ENCODE measurements at regions of chr16 and their contacts with region 1.

Region 1: DNA sequence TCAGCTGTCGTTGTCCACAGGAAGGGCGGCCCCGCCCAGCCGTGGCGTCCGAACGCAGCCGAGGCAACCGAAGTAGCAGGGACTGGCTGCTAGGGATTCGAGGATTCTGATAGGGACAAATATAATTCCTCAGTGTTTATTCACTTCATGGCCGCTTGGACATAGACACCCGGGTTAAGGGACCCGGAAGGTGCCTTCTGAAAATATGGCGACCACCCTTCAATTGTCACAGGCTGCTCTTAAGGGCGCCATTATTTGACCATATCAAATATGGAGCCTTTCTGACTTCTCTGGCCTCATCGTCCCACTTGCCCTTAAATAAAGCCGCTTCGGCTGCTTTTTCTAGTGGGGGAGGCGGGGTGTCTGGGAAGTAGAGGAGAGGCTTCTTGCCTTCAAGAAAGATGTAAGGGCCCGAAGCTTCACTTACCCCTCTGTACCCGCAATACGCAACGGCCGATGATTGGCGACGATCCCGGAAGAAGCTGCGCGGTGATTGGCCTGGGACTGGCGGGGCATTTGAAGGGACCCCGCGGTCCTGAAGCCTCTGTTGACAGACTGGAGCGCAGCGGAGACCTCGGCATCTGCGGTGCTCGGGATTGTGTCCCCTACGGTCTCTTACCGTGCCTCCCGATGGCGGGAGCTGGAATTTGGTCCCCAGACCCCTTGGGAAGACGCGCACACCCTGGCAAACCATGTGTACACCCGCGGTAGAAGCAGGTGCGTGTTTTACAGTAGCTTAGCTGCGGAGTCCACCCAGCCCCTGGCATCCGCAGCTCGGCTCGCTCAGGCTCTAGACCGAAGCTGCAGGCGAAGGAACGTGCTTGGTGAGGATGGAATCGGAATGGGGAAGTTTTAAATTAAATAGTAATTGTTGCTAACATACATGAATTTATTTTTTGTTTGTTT is at the start of gene ZNF688:
- DNase-seq: peak; percentile 90
- ATAC-seq: peak; percentile 86
- H3K4me3 Mint-ChIP-seq: peak within 1 kb of the TSS; percentile 97
- H3K27ac Mint-ChIP-seq: peak within 1 kb of the TSS; percentile 90
- H3K4me1 Mint-ChIP-seq: peaks cover 36% of the 10 kb centered on the region
- H3K27me3 Mint-ChIP-seq: no peaks in the 10 kb centered on the region
- total RNA-seq, gene ZNF688: 17.8 to 18.3 TPM

Region 2: DNA sequence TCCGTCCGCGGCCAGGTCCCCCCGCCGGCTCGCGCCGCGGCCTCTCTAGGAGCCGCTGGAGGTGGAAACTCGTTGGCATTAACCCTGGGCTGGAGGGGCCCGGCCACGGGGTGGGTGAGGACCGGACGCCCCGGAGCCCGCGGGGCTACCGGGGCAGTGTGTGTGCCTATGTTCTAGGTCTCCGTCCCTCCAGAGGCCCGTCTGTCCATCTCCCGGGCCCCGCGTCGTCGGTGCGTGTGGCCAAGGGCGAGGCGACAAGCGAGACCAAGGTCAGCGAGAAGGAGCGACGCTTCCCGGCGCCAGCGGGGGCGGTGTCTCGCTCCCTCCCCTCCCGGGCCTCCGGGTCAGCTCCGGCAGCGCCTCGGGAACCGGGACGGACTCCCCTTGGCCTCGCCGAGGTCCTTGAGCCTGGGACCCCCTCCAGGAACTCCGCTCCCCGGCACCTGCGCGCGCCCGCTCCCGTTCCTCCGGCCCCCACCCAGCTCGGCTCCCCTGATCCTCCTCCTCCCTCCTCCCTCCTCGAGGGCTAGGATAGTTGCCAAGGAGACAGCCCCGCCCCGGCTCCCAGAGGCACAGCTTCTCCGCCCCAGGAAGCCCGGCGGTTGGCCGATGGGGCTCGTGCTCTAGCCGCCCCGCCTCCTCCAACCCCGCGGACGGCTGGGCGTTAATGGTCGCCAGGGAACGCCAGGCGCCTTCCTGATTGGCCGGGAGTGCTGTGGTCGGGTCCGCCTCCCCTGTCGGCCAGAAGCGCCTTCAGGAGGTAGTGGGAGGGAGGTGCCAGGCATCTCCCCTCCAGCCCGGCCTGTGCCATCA is 44.9 kb before region 1 on chr16:
- POLR2A ChIA-PET with region 1: interaction called, 10 read pairs
- DNase-seq: peak; percentile 95
- ATAC-seq: peak; percentile 88
- H3K4me3 Mint-ChIP-seq: peak overlapping the region; percentile 76
- H3K27ac Mint-ChIP-seq: peak overlapping the region; percentile 83
- H3K4me1 Mint-ChIP-seq: peaks cover 21% of the 10 kb centered on the region
- H3K27me3 Mint-ChIP-seq: no peaks in the 10 kb centered on the region

Region 3: GRCh38 chr16:30551781-30552180 is 20.2 kb before region 1 on chr16:
- POLR2A ChIA-PET with region 1: interaction called, 68 read pairs
- DNase-seq: peak; percentile 63
- ATAC-seq: peak; percentile 93
- H3K4me3 Mint-ChIP-seq: peak overlapping the region; percentile 73
- H3K27ac Mint-ChIP-seq: peak overlapping the region; percentile 93
- H3K4me1 Mint-ChIP-seq: peaks cover 45% of the 10 kb centered on the region
- H3K27me3 Mint-ChIP-seq: no peaks in the 10 kb centered on the region

Region 4: GRCh38 chr16:30557957-30558788 is 13.8 kb before region 1 on chr16 and contains the start of gene ZNF764:
- POLR2A ChIA-PET with region 1: interaction called, 68 read pairs
- DNase-seq: peak; percentile 94
- ATAC-seq: peak; percentile 97
- H3K4me3 Mint-ChIP-seq: peak within 1 kb of the TSS; percentile 90
- H3K27ac Mint-ChIP-seq: peak within 1 kb of the TSS; percentile 91
- H3K4me1 Mint-ChIP-seq: peaks cover 34% of the 10 kb centered on the region
- H3K27me3 Mint-ChIP-seq: no peaks in the 10 kb centered on the region
- total RNA-seq, gene ZNF764: 20.9 to 23.3 TPM

Region 5: DNA sequence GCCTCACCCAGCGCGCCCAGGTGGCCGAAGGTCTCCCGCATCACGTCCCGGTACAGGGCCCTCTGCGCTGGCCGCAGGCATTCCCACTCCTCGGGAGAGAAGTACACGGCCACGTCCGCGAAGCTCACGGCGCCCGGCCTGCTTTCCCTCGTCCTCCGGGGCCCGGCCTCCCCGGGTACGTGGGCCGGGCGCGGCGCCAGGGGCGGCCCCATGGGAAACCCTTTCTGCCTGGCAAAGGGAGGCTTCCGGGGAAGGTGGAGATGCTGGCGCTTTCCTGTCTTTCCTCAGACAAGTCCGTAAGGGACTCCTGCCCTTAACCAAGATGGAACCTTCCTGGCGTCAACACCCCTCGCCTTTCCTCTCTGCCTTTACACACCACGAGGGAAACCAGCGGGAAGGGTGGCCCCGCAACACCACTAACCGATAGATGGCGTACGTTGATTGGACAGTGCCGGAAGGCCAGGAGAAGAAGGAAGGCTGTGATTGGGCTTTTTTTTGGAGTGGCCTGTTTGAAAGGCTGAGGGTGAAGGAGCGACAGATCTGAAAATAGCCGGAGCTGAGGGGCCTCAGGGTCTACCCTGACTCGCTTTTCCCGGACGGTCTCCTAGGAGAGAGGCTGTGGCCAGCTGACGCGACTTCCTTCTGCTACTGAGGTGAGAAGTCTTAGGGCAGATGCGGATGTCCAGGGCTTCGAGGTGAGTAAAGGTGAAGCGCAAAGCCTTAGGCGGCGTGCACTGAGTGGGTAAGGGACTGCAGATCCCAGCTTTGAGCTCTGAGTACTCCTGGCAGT is 13.6 kb after region 1 on chr16 and contains the start of gene ZNF785:
- POLR2A ChIA-PET with region 1: interaction called, 52 read pairs
- DNase-seq: peak; percentile 88
- ATAC-seq: peak; percentile 98
- H3K4me3 Mint-ChIP-seq: peak within 1 kb of the TSS; percentile 96
- H3K27ac Mint-ChIP-seq: peak within 1 kb of the TSS; percentile 84
- H3K4me1 Mint-ChIP-seq: peaks cover 20% of the 10 kb centered on the region
- H3K27me3 Mint-ChIP-seq: no peaks in the 10 kb centered on the region
- total RNA-seq, gene ZNF785: 22.3 to 24.8 TPM

Region 6: DNA sequence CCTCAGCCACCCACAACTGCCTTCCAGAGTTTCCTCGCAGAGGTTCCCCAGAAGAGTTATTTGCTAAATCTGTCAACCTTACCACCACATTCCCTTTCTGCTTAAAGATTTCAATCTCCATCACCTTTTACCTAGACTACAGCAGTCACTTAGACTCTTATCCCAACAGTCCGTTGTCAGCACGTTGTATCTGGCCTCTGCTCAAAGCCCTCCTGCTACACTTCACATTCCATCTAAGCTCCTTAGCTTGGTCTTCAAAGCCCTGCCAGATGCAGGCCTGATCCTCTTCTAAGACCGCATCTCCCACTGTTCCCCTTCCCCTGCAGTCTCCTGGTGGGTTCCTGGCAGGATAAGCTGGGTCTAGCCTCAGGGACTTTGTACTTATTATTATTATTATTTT is 116.7 kb after region 1 on chr16:
- POLR2A ChIA-PET with region 1: no interaction called
- DNase-seq: no peak
- ATAC-seq: no peak
- H3K4me3 Mint-ChIP-seq: no peak overlapping the region
- H3K27ac Mint-ChIP-seq: no peak overlapping the region
- H3K4me1 Mint-ChIP-seq: peaks cover 5% of the 10 kb centered on the region
- H3K27me3 Mint-ChIP-seq: no peaks in the 10 kb centered on the region

Measured in activated naive CD8-positive, alpha-beta T cell treated with anti-CD3 and anti-CD28 coated beads, Interleukin-2, amount 10 ng/mL, durations not matched to agents 7 days and 5 days (primary cell).